CD14-positive monocyte (primary cell): ENCODE measurements at regions of chr10 and their contacts with region 1.

Region 1: DNA sequence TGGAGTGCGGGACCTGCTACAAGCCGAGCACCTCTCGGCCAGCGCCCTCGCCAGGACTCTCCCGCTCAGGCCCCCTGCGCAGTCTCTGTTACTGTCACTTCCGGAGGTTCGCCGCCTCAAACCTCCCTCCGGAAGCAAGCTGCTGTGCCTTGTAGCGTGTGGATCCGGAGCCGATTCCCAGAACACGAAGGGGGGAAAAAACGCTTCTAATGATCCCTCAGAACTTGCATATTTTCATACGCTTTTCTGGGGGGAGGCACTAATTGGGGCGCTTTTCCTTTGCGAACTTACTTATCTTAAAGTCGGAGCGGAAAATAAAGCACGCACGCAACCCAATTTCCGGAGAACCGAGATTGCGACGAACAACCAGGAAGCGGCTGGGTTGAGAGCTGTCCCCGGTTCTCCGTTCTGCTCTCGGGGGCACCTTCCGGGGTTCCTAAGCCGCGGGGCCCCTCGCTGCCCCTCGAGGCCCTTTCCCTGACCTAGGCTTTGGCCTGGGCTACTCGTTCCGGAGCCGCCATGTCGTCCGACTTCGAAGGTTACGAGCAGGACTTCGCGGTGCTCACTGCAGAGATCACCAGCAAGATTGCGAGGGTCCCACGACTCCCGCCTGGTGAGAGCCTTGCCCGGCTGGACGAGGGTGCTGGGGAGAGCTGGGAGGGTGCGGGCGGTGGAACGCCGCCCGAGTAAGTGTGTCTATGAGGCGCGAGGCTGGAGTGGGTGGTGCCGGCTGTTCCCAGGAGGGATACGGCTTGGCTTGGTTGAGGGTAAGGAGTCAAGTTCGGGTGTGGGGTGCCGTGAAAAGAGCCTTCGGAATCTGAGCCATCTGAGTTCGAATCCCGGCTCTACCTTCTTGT is at the starts of genes VTI1A and ZDHHC6:
- DNase-seq: peak; percentile 79 to 84 (median 84)
- H3K4me3 ChIP-seq: peak within 1 kb of the TSS; percentile 63 to 98 (median 96)
- H3K4me3 Mint-ChIP-seq: peak within 1 kb of the TSS; percentile 96 to 99
- H3K27ac ChIP-seq: peak within 1 kb of the TSS; percentile 85 to 100
- H3K27ac Mint-ChIP-seq: peak within 1 kb of the TSS; percentile 93 to 99 (median 97)
- H3K4me1 ChIP-seq: peaks cover 24 to 34% of the 10 kb centered on the region in 2 donors
- H3K4me1 Mint-ChIP-seq: peaks cover 24% of the 10 kb centered on the region
- H3K27me3 ChIP-seq: no peaks in the 10 kb centered on the region
- H3K27me3 Mint-ChIP-seq: peaks cover 0 to 3% (median 1%) of the 10 kb centered on the region in 3 donors
- CTCF ChIP-seq: no peak
- polyA plus RNA-seq, gene VTI1A: 23.6 to 25.4 (median 24.1) TPM
- polyA plus RNA-seq, gene ZDHHC6: 34.0 to 39.2 (median 39.0) TPM

Region 2: DNA sequence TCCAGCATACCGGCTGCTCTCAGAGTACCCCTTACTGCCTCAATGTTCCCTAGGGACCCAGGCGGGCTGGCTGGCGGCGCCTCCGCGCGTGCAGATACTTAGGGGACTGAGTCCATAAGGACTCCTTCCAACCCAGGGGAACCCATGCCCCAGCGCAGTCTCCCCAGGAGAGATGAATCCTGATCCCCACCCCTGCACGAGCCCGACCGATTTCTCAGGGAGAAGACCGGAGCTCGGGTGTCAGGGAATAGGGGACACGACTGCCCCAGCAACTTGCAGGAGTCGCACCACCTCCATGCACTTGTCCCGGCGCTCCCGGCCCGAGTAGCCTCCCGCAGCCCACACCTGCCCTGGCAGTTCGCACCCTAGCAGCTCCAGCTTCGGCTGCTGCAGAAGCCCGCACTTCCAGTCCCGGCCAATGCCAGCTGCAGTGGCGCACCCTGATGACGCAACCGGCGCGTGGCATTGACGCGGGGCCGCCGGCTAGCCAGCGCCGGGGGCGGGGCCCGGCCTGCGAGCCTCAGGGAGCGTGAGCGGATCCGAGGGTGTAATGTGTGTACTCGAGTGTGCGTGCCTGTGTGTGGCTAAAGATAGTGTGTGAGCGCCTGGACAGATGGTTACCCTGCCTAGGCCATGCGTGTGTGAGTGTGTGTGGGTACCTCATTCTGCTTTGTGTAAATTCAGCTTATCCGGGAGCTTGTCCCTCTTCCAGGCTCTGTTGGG is 263.6 kb before region 1 on chr10 and contains the start of gene GPAM:
- intact Hi-C with region 1: loop called in 1 of 2 experiments (anchors 5 kb)
- DNase-seq: peak; percentile 90 to 92 (median 90)
- H3K4me3 ChIP-seq: peak within 1 kb of the TSS; percentile 60 to 90 (median 76)
- H3K4me3 Mint-ChIP-seq: peak within 1 kb of the TSS; percentile 88 to 95
- H3K27ac ChIP-seq: peak within 1 kb of the TSS in 1 of 2 donors; percentile 78
- H3K27ac Mint-ChIP-seq: peak within 1 kb of the TSS; percentile 76 to 94 (median 86)
- H3K4me1 ChIP-seq: peaks cover 11 to 15% of the 10 kb centered on the region in 2 donors
- H3K4me1 Mint-ChIP-seq: peaks cover 15% of the 10 kb centered on the region
- H3K27me3 ChIP-seq: peaks cover 0 to 3% of the 10 kb centered on the region in 2 donors
- H3K27me3 Mint-ChIP-seq: peaks cover 7 to 13% (median 8%) of the 10 kb centered on the region in 3 donors
- CTCF ChIP-seq: no peak
- polyA plus RNA-seq, gene GPAM: 0.37 to 1.3 (median 0.59) TPM

Region 3: GRCh38 chr10:112389147-112389822 is 57.8 kb before region 1 on chr10:
- intact Hi-C with region 1: loop called in 1 of 2 experiments (anchors 5 kb)
- DNase-seq: peak; percentile 89 to 99 (median 95)
- H3K4me3 ChIP-seq: no peak overlapping the region
- H3K4me3 Mint-ChIP-seq: peak overlapping the region in 1 of 2 donors; percentile 21
- H3K27ac ChIP-seq: peak overlapping the region; percentile 81 to 92
- H3K27ac Mint-ChIP-seq: peak overlapping the region; percentile 93 to 99 (median 97)
- H3K4me1 ChIP-seq: peaks cover 10 to 11% of the 10 kb centered on the region in 2 donors
- H3K4me1 Mint-ChIP-seq: peaks cover 16% of the 10 kb centered on the region
- H3K27me3 ChIP-seq: no peaks in the 10 kb centered on the region
- H3K27me3 Mint-ChIP-seq: no peaks in the 10 kb centered on the region
- CTCF ChIP-seq: no peak

Region 4: GRCh38 chr10:112631501-112632410 is 184.7 kb after region 1 on chr10:
- intact Hi-C with region 1: no loop called
- DNase-seq: no peak
- H3K4me3 ChIP-seq: no peak overlapping the region
- H3K4me3 Mint-ChIP-seq: no peak overlapping the region
- H3K27ac ChIP-seq: no peak overlapping the region
- H3K27ac Mint-ChIP-seq: no peak overlapping the region
- H3K4me1 ChIP-seq: no peaks in the 10 kb centered on the region
- H3K4me1 Mint-ChIP-seq: no peaks in the 10 kb centered on the region
- H3K27me3 ChIP-seq: no peaks in the 10 kb centered on the region
- H3K27me3 Mint-ChIP-seq: no peaks in the 10 kb centered on the region
- CTCF ChIP-seq: no peak